ENCODE measurements at regions of chr12 and their contacts with region 1.

Region 1: DNA sequence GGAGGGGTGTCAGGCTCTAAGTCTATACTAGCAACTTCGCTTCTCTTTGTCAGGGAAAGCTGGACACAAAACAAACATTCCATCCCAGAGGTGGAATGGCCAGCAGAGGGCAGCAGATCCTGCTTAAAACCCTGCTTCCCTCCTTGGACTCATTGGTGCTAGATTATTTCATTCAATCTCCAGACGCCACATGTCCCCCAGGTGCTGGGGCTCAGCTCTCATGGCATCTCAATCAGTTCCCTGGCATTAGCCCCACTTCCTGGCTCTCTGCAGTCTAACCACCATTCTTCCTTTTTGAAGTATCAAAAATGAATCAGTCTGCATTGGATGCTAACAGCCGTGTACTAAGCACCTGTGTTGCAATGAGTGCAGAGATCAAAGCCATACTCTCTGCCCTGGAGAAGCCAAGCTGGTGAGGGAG is 8.1 kb upstream of the PPP1R1A start:
- DNase-seq: peak in 8 of 9 experiments; percentile 13 to 66 (median 54)
- ATAC-seq: peak; percentile 36
- H3K4me3 ChIP-seq: no peak overlapping the region
- H3K4me3 Mint-ChIP-seq: no peak overlapping the region
- H3K27ac ChIP-seq: no peak overlapping the region
- H3K27ac Mint-ChIP-seq: no peak overlapping the region
- H3K4me1 ChIP-seq: peaks cover 5% of the 10 kb centered on the region
- H3K4me1 Mint-ChIP-seq: peaks cover 4% of the 10 kb centered on the region
- H3K27me3 ChIP-seq: no peaks in the 10 kb centered on the region
- H3K27me3 Mint-ChIP-seq: peaks cover 5% of the 10 kb centered on the region
- CTCF ChIP-seq: peak; percentile 73

Region 2: GRCh38 chr12:54579696-54580333 is 16.7 kb before region 1 on chr12:
- CTCF ChIA-PET with region 1: interaction called, 37 read pairs
- POLR2A ChIA-PET with region 1: no interaction called
- intact Hi-C with region 1: no loop called
- DNase-seq: peak; percentile 66 to 87 (median 80)
- ATAC-seq: peak; percentile 98
- H3K4me3 ChIP-seq: no peak overlapping the region
- H3K4me3 Mint-ChIP-seq: no peak overlapping the region
- H3K27ac ChIP-seq: no peak overlapping the region
- H3K27ac Mint-ChIP-seq: no peak overlapping the region
- H3K4me1 ChIP-seq: peaks cover 6% of the 10 kb centered on the region
- H3K4me1 Mint-ChIP-seq: peaks cover 5% of the 10 kb centered on the region
- H3K27me3 ChIP-seq: no peaks in the 10 kb centered on the region
- H3K27me3 Mint-ChIP-seq: peaks cover 9% of the 10 kb centered on the region
- CTCF ChIP-seq: peak; percentile 97

Region 3: GRCh38 chr12:54616933-54617680 is 20.6 kb after region 1 on chr12:
- CTCF ChIA-PET with region 1: interaction called, 11 read pairs
- POLR2A ChIA-PET with region 1: no interaction called
- intact Hi-C with region 1: no loop called
- DNase-seq: peak in 1 of 9 experiments; percentile 32
- ATAC-seq: no peak
- H3K4me3 ChIP-seq: no peak overlapping the region
- H3K4me3 Mint-ChIP-seq: no peak overlapping the region
- H3K27ac ChIP-seq: no peak overlapping the region
- H3K27ac Mint-ChIP-seq: no peak overlapping the region
- H3K4me1 ChIP-seq: no peaks in the 10 kb centered on the region
- H3K4me1 Mint-ChIP-seq: no peaks in the 10 kb centered on the region
- H3K27me3 ChIP-seq: peaks cover 0 to 2% of the 10 kb centered on the region in 2 experiments
- H3K27me3 Mint-ChIP-seq: peaks cover 32% of the 10 kb centered on the region
- CTCF ChIP-seq: no peak

Region 4: DNA sequence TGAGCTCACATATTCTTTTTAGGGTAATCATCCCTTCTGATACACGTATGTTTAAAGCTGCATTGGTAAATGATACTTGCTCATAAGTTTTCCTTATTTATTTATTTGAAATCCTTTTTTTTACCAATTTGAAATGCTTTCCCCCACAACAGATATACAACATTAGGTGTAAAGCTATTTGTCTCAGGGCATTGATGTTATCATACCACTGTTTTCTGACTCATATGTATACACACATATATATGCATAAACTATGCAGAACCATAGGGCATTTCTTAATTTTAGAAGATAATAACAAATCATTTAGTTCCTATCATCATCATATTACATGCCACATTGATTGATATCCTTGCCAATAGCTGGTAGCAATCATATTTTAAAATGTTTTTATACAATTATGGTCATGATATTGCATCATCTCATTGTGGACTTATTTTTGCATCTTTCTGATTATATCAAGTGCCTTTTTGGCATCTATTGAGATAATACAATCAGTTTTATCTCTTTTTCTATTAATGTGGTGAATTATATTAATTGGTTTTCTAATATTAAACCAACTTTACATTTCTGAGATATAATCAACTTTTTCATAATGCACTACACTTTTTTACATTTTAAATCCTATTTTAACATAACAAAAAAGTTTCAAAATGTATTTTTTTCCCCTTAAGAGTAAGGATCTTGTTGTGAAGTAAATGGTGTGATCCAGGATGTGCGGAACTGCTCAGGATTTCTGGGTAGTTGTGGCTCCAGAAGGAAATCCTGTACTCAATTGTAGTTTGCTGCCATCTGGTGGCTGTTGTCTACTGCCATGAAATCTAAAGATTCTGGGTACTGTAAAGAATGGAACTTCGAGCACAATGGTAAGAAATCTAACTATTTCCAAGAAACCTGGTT is 546.4 kb after region 1 on chr12:
- CTCF ChIA-PET with region 1: no interaction called
- POLR2A ChIA-PET with region 1: no interaction called
- intact Hi-C with region 1: loop called in 1 of 2 experiments (anchors 5 kb)
- DNase-seq: peak; percentile 6 to 65 (median 42)
- ATAC-seq: no peak
- H3K4me3 ChIP-seq: no peak overlapping the region
- H3K4me3 Mint-ChIP-seq: no peak overlapping the region
- H3K27ac ChIP-seq: no peak overlapping the region
- H3K27ac Mint-ChIP-seq: no peak overlapping the region
- H3K4me1 ChIP-seq: peaks cover 3% of the 10 kb centered on the region
- H3K4me1 Mint-ChIP-seq: peaks cover 5% of the 10 kb centered on the region
- H3K27me3 ChIP-seq: no peaks in the 10 kb centered on the region
- H3K27me3 Mint-ChIP-seq: peaks cover 5% of the 10 kb centered on the region
- CTCF ChIP-seq: peak; percentile 81